IMR-90 (cell line): ENCODE measurements at regions of chr9 and their contacts with region 1.

Region 1: GRCh38 chr9:91117959-91118703 is 243.6 kb downstream of the AUH start:
- DNase-seq: peak; percentile 82
- ATAC-seq: peak; percentile 86
- H3K4me3 ChIP-seq: no peak overlapping the region
- H3K27ac ChIP-seq: peak overlapping the region; percentile 99
- H3K4me1 ChIP-seq: peaks cover 21% of the 10 kb centered on the region
- H3K27me3 ChIP-seq: no peaks in the 10 kb centered on the region
- CTCF ChIP-seq: no peak
- POLR2A ChIP-seq: no peak
- RAD21 ChIP-seq: no peak

Region 2: DNA sequence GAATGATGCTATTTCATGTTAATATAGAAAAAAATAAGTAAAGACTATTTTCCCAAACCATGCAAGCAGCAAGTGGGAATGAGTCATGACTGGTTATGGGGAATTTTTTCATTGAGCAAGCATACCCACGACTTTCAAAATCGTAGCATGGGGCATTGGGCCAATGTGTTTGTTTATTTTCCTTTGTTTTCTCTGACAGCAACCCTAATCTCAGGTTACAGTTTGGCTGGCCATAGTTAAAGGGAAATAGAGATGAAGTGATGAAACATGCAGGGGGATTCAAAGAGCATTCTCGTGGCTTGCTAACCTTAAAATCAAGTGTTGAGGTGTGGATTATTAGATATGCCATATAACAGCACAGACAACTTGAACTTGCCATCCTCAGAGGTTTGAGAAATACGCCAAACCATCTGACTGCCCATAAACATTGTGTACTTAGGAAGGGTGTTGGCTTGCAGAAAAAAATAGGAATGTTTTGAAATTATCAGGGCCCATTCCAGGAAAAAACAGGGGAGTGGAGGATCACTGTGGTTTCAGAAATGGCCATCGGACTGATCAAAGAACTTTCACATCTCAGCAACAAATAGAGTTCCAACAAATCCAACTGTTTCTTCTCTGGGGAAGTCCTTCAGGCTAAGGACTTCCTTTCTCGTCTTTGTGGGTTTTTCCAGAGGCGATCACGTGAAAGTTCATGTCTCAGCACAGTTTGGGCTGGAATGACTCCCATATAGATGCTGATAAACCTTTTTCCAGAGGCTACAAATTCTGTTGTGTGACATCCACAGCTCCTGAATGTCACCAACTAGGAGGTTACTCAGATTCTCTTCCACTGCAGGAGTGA is 57.4 kb before region 1 on chr9:
- CTCF ChIA-PET with region 1: no interaction called
- POLR2A ChIA-PET with region 1: no interaction called
- dilution Hi-C with region 1: no loop called
- in situ Hi-C with region 1: no loop called
- intact Hi-C with region 1: loop called (anchors 2 kb)
- DNase-seq: peak; percentile 99
- ATAC-seq: peak; percentile 68
- H3K4me3 ChIP-seq: no peak overlapping the region; the same call in 1 of the 2 replicates
- H3K27ac ChIP-seq: peak overlapping the region; percentile 89
- H3K4me1 ChIP-seq: peaks cover 26% of the 10 kb centered on the region
- H3K27me3 ChIP-seq: no peaks in the 10 kb centered on the region
- CTCF ChIP-seq: no peak
- POLR2A ChIP-seq: peak; percentile 55
- RAD21 ChIP-seq: no peak; the same call in 1 of the 2 replicates

Region 3: GRCh38 chr9:91546574-91546973 is 428.4 kb after region 1 on chr9:
- CTCF ChIA-PET with region 1: no interaction called
- POLR2A ChIA-PET with region 1: no interaction called
- dilution Hi-C with region 1: no loop called
- in situ Hi-C with region 1: no loop called
- intact Hi-C with region 1: no loop called
- DNase-seq: peak; percentile 81
- ATAC-seq: peak; percentile 57; the same call in 1 of the 2 replicates
- H3K4me3 ChIP-seq: no peak overlapping the region
- H3K27ac ChIP-seq: no peak overlapping the region
- H3K4me1 ChIP-seq: peaks cover 3% of the 10 kb centered on the region; the same call in 1 of the 2 replicates
- H3K27me3 ChIP-seq: no peaks in the 10 kb centered on the region
- CTCF ChIP-seq: no peak
- POLR2A ChIP-seq: 0 out of 2 replicates have a peak, but pooled peaks have one; percentile 23
- RAD21 ChIP-seq: 0 out of 2 replicates have a peak, but pooled peaks have one; percentile 17